MCF 10A (cell line): ENCODE measurements at regions of chr5 and their contacts with region 1.

Region 1: GRCh38 chr5:61933787-61934626 is 372.0 kb upstream of the KIF2A start:
- DNase-seq: peak; percentile 88
- H3K4me3 Mint-ChIP-seq: no peak overlapping the region
- H3K27ac Mint-ChIP-seq: no peak overlapping the region
- H3K4me1 Mint-ChIP-seq: peaks cover 19% of the 10 kb centered on the region
- H3K27me3 Mint-ChIP-seq: no peaks in the 10 kb centered on the region
- CTCF ChIP-seq: peak; percentile 78

Region 2: GRCh38 chr5:60960591-60960990 is 973.4 kb before region 1 on chr5:
- CTCF ChIA-PET with region 1: interaction called, 16 read pairs
- POLR2A ChIA-PET with region 1: interaction called, 4 read pairs
- intact Hi-C with region 1: loop called (anchors 2 kb)
- DNase-seq: peak; percentile 26
- H3K4me3 Mint-ChIP-seq: no peak overlapping the region
- H3K27ac Mint-ChIP-seq: no peak overlapping the region
- H3K4me1 Mint-ChIP-seq: no peaks in the 10 kb centered on the region
- H3K27me3 Mint-ChIP-seq: no peaks in the 10 kb centered on the region
- CTCF ChIP-seq: peak; percentile 48

Region 3: GRCh38 chr5:61055434-61056006 is 878.5 kb before region 1 on chr5:
- CTCF ChIA-PET with region 1: interaction called, 8 read pairs
- POLR2A ChIA-PET with region 1: no interaction called
- intact Hi-C with region 1: loop called (anchors 1 kb)
- DNase-seq: peak; percentile 51
- H3K4me3 Mint-ChIP-seq: no peak overlapping the region
- H3K27ac Mint-ChIP-seq: no peak overlapping the region
- H3K4me1 Mint-ChIP-seq: peaks cover 33% of the 10 kb centered on the region
- H3K27me3 Mint-ChIP-seq: no peaks in the 10 kb centered on the region
- CTCF ChIP-seq: peak; percentile 60

Region 4: DNA sequence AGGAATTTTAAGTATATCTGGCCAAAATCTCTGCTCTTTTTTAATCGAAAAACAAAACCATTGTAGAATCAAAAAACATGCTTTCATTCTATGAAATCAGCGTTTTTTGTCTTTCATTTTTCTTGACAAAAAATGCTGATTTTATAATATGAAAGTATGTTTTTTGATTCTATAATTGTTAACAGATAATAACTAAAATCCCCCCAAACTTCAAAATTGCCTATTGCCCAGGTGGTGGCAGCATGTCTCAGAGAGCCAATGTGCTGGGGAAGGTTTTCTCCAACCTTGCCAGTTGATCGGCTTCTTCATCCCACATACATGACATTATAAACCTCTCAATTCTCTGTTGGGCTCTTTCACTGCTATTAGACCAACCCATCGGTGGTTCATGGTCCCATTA is 766.6 kb before region 1 on chr5:
- CTCF ChIA-PET with region 1: interaction called, 7 read pairs
- POLR2A ChIA-PET with region 1: no interaction called
- intact Hi-C with region 1: loop called (anchors 1 kb)
- DNase-seq: peak; percentile 54
- H3K4me3 Mint-ChIP-seq: no peak overlapping the region
- H3K27ac Mint-ChIP-seq: no peak overlapping the region
- H3K4me1 Mint-ChIP-seq: peaks cover 8% of the 10 kb centered on the region
- H3K27me3 Mint-ChIP-seq: no peaks in the 10 kb centered on the region
- CTCF ChIP-seq: peak; percentile 50

Region 5: GRCh38 chr5:61817472-61818326 is 116.3 kb before region 1 on chr5:
- CTCF ChIA-PET with region 1: interaction called, 3 read pairs
- POLR2A ChIA-PET with region 1: no interaction called
- intact Hi-C with region 1: loop called (anchors 2 kb)
- DNase-seq: peak; percentile 53
- H3K4me3 Mint-ChIP-seq: no peak overlapping the region
- H3K27ac Mint-ChIP-seq: no peak overlapping the region
- H3K4me1 Mint-ChIP-seq: peaks cover 17% of the 10 kb centered on the region
- H3K27me3 Mint-ChIP-seq: no peaks in the 10 kb centered on the region
- CTCF ChIP-seq: peak; percentile 51

Region 6: DNA sequence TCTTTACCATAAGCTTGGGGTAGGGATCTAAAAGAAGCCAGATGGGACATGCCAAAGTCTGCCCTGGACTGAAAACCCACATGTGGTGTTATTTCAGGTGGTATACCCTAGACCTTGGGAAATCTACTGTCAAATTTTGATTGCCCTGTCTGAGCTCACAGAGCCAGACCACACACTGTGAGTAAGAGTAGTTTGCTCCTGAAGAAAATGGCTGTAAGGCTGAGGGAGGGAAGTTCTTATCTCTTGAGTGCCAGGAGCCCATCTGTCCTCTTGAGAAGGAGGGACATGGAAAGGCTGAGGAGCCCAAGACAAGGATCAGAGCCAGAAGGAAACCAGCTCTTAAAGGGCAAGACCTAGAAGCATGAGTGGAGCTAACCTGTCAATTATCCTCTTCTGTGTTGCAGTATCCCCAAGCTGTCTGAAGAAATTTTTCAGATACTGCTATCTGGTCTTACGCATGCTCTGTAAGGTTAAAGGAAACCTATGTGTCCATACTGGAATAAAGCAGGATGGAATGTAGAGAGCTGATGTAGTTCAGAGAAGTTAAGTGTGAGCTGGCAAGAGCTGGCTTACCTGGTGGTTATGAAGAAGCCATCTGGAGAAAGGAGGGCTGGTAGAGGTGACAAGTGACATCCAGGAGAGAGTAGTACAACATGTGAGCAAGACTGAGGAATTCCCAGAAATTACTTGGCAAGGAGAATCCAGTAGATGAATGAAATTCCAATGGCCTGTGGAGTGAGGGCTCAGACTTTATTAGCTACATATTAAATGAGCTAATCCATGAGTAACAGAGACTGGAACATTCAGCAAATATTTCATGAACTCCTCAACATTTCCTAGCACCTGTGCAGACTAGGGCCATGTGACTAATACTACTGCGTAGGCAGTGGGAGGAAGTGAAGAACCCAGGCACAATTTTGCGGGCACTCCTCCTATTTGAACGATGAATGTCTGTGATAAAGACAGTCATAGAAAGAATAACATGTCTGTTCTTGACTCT is 17.1 kb before region 1 on chr5:
- CTCF ChIA-PET with region 1: interaction called, 14 read pairs
- POLR2A ChIA-PET with region 1: interaction called, 6 read pairs
- intact Hi-C with region 1: no loop called
- DNase-seq: peak; percentile 81
- H3K4me3 Mint-ChIP-seq: peak overlapping the region; percentile 0
- H3K27ac Mint-ChIP-seq: peak overlapping the region; percentile 43
- H3K4me1 Mint-ChIP-seq: peaks cover 27% of the 10 kb centered on the region
- H3K27me3 Mint-ChIP-seq: no peaks in the 10 kb centered on the region
- CTCF ChIP-seq: no peak

Region 7: DNA sequence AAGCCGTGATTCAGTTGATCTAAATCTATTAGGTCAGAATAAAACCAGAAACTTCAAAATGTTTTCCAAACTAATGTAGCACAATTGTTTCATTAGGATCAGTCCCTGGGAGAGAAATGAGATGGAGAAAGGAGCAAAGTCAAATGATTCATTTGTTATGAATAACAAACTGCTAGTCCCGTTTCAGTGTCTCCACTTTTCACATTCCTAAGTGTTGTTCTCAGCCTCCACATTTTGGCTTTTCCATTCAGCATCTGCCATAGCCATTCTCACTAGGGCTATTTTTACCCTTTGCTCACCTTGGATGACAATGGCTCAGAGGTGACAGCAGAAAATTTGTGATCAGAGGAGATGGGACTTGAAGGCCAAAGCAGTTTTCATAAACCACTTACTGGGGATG is 57.9 kb after region 1 on chr5:
- CTCF ChIA-PET with region 1: no interaction called
- POLR2A ChIA-PET with region 1: no interaction called
- intact Hi-C with region 1: no loop called
- DNase-seq: no peak
- H3K4me3 Mint-ChIP-seq: no peak overlapping the region
- H3K27ac Mint-ChIP-seq: no peak overlapping the region
- H3K4me1 Mint-ChIP-seq: no peaks in the 10 kb centered on the region
- H3K27me3 Mint-ChIP-seq: no peaks in the 10 kb centered on the region
- CTCF ChIP-seq: no peak

Region 8: GRCh38 chr5:62143268-62144229 is 209.5 kb after region 1 on chr5:
- CTCF ChIA-PET with region 1: interaction called, 18 read pairs
- POLR2A ChIA-PET with region 1: interaction called, 4 read pairs
- intact Hi-C with region 1: no loop called
- DNase-seq: peak; percentile 49
- H3K4me3 Mint-ChIP-seq: no peak overlapping the region
- H3K27ac Mint-ChIP-seq: no peak overlapping the region
- H3K4me1 Mint-ChIP-seq: peaks cover 12% of the 10 kb centered on the region
- H3K27me3 Mint-ChIP-seq: no peaks in the 10 kb centered on the region
- CTCF ChIP-seq: peak; percentile 60